ENCODE measurements at regions of chr4 and their contacts with region 1.

Region 1: DNA sequence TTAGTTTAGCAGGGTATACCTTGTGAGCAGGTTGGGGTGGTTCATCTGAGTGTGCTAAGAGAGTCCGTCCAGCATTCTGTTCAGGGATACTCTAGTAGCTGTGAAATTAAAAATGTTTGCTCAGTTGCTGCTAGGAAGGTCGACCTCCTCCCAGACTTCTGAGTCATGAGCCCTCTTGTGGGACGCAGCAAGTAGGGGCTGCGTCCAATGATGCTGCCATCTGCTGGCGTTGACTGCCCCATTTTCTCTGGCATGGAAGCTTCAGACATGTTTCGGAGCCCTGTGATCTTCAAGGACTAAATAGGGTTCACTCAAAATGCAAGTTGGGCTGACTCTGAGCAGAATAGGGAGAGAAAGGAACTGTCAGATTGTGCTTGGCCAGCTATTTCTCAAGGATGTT is 201.0 kb upstream of the ARSJ start:
- DNase-seq: peak; percentile 72 to 75
- ATAC-seq: no peak
- H3K4me3 ChIP-seq: no peak overlapping the region
- H3K27ac ChIP-seq: no peak overlapping the region
- H3K4me1 ChIP-seq: no peaks in the 10 kb centered on the region
- H3K27me3 ChIP-seq: no peaks in the 10 kb centered on the region

Region 2: DNA sequence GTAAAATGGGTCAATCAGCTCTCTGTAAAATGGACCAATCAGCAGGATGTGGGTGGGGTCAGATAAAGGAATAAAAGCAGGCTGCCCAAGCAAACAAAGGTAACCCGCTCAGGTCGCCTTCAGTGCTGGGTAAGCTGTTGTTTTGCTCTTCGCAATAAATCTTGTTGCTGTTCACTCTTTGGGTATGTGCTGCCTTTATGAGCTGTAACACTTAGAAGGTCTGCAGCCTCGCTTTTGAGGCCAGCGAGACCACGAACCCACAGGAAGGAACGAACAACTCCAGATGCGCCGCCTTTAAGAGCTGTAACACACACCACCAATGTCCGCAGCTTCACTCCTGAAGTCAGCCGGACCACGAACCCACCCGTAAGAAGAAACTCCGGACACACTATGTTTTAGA is 407.5 kb before region 1 on chr4:
- intact Hi-C with region 1: loop called in 1 of 2 experiments (anchors 10 kb)
- DNase-seq: no peak
- ATAC-seq: no peak
- H3K4me3 ChIP-seq: no peak overlapping the region
- H3K27ac ChIP-seq: no peak overlapping the region
- H3K4me1 ChIP-seq: no peaks in the 10 kb centered on the region
- H3K27me3 ChIP-seq: no peaks in the 10 kb centered on the region